ENCODE measurements at regions of chr2 and their contacts with region 1.

Region 1: DNA sequence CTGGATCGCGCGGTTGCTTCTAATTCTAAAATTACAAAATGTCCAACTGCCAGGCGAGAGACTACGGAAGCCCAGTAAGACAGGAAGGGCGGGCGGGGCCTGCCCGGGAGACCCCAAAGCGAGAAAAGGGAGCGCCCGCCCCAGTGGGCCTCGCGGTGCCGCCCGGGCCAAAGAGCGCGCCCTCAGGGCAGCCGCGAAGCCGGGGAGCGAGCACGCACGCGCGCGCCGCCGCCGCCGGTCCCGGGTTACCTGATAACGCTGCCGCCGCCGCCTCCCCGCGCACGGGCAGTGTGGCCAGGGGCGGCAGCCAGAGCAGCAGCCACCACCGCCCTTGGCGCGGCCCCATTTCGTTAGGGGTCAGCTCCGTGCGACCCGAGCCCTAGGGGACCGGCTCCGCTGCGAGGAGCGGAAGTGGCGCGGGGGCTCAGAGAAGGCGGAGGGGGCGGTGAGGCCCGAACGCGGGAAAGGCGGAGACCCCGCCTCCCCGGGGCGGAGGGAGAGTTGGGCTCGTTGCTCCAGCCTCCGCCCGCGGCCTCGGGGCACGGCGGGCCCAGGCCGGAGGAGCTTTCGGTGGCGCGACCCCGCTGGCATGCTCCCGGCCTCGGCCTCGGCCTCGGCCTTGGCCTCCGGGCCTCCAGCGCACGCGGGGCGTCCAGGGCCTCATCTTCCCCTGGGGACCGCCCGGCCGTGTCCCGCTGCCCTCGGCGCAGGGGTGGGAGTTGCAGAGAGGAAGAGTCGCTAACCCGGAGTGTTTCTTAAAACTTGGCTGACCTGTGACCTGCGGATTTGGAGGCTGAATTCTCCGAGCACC is at the start of gene NEMP2:
- DNase-seq: peak; percentile 82
- H3K4me3 Mint-ChIP-seq: peak within 1 kb of the TSS; percentile 96
- H3K27ac Mint-ChIP-seq: peak within 1 kb of the TSS; percentile 100
- H3K4me1 Mint-ChIP-seq: peaks cover 51% of the 10 kb centered on the region
- H3K27me3 Mint-ChIP-seq: no peaks in the 10 kb centered on the region
- total RNA-seq, gene NEMP2: 32.9 to 34.2 TPM

Region 2: GRCh38 chr2:189302274-189302948 is 1232.1 kb before region 1 on chr2:
- CTCF ChIA-PET with region 1: no interaction called
- intact Hi-C with region 1: loop called (anchors 10 kb)
- DNase-seq: peak; percentile 41
- H3K4me3 Mint-ChIP-seq: peak overlapping the region; percentile 7
- H3K27ac Mint-ChIP-seq: peak overlapping the region; percentile 91
- H3K4me1 Mint-ChIP-seq: peaks cover 79% of the 10 kb centered on the region
- H3K27me3 Mint-ChIP-seq: no peaks in the 10 kb centered on the region

Region 3: DNA sequence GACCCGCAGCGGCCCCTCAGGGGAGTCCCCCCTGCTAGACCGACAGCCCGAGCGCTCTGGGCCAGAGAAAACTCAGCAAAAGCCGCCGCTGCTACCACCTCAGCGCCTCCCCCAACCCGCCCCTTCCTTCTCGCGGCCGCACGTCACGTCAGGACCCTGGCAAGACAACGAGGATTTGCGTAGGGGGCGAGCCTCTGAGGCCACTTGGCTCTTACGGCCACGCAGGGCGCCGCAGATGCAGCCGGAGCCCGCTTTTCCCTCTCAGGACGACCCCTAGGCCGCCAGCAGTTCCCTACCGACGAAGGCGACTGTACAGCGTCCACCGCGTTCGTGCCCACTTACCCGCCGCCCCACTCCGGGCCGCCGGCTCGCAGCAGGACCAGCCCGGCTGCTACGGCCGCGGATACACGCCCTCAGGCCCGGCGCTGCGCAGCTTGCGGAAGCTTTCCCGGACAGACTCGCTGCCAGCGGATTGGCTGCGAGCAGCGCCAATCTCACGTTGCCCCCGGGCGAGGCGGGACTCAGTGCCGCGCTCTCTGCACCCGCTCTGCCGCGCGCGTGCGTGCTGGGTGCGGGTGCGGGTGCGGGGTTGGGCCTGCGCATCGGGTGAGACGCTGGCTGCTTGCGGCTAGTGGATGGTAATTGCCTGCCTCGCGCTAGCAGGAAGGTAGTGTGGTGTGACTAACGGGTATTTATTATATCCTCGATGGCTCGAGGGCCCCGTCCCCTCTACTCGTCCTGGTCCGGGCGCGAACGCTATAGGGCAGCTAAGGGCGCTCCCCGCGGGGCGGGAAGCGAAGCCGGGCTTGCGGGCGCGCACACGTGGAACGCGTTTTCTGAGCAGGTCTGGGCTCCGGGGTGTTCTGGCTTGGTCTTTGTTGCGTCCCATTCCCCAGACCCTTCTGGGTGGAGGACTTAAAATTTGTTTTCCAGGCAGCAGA is 750.3 kb before region 1 on chr2 and contains the starts of genes ORMDL1 and PMS1:
- CTCF ChIA-PET with region 1: no interaction called
- intact Hi-C with region 1: loop called (anchors 5 kb)
- DNase-seq: peak; percentile 93
- H3K4me3 Mint-ChIP-seq: peak within 1 kb of the TSS; percentile 93
- H3K27ac Mint-ChIP-seq: peak within 1 kb of the TSS; percentile 92
- H3K4me1 Mint-ChIP-seq: peaks cover 51% of the 10 kb centered on the region
- H3K27me3 Mint-ChIP-seq: no peaks in the 10 kb centered on the region
- total RNA-seq, gene ORMDL1: 34.6 to 37.3 TPM
- total RNA-seq, gene PMS1: 29.7 to 32.5 TPM

Region 4: GRCh38 chr2:190511104-190511503 is 23.4 kb before region 1 on chr2:
- CTCF ChIA-PET with region 1: interaction called, 7 read pairs
- intact Hi-C with region 1: loop called (anchors 1 kb)
- DNase-seq: no peak
- H3K4me3 Mint-ChIP-seq: no peak overlapping the region
- H3K27ac Mint-ChIP-seq: no peak overlapping the region
- H3K4me1 Mint-ChIP-seq: peaks cover 26% of the 10 kb centered on the region
- H3K27me3 Mint-ChIP-seq: no peaks in the 10 kb centered on the region

Region 5: DNA sequence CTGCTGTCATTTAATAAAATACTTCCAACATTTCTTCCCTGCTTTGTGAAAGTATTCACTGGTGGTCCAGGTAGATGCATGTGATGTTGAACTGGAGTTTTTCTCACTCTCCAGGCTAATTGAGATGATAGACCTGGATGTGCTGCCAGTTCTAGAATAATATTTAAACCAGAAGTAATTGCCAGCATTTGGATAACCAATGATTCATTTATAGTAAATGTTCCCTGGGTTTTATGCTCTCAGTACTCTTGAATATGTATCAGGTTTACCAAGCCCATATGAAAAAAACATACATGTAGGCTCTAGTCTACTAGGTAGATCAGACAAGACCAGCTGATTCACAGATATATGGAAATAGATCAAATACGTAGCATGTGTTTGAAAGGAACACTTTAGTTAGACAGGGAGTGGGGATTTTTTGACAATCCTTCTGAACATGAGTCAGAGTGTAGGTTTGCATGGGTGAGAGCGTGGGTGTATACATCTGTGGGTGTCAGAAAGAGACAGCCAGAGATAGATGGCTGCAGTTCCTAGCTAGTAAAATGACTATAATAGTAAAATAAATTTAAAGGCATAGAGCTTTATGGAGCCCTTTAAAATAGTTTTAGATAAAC is 229.5 kb after region 1 on chr2:
- CTCF ChIA-PET with region 1: no interaction called
- intact Hi-C with region 1: loop called (anchors 1 kb)
- DNase-seq: peak; percentile 78
- H3K4me3 Mint-ChIP-seq: no peak overlapping the region
- H3K27ac Mint-ChIP-seq: peak overlapping the region; percentile 7
- H3K4me1 Mint-ChIP-seq: peaks cover 56% of the 10 kb centered on the region
- H3K27me3 Mint-ChIP-seq: no peaks in the 10 kb centered on the region

Region 6: DNA sequence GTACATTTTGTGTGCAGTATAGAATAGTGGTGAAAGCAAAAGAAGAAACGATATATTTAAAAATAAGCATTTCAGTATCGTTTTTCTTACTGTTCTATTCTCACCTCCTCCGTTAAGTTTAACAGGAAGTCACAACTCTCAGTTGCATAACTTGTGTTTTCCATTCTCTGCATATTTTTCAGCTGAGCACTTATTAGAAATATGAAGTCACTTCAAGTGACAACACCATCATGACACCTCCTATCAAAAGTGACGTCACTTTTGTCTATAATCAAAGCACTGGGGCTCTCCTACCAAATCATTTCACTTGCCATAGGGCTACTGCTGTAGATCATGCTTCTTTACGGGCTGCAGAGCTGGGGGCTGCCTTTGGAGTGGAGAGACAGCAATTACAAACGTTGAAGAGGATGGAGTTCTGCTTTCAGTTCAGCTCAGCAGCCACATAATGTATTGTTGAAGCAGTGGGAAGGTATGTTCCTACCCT is 579.9 kb after region 1 on chr2:
- CTCF ChIA-PET with region 1: no interaction called
- intact Hi-C with region 1: loop called (anchors 10 kb)
- DNase-seq: peak; percentile 74
- H3K4me3 Mint-ChIP-seq: peak overlapping the region; percentile 57
- H3K27ac Mint-ChIP-seq: peak overlapping the region; percentile 87
- H3K4me1 Mint-ChIP-seq: peaks cover 78% of the 10 kb centered on the region
- H3K27me3 Mint-ChIP-seq: no peaks in the 10 kb centered on the region

Measured in activated naive CD4-positive, alpha-beta T cell treated with anti-CD3 and anti-CD28 coated beads for 36 hours (primary cell).